Activated naive CD8-positive, alpha-beta T cell treated with anti-CD3 and anti-CD28 coated beads, Interleukin-2, amount 10 ng/mL, durations not matched to agents 7 days and 5 days (primary cell): ENCODE measurements at regions of chr3 and their contacts with region 1.

Region 1: GRCh38 chr3:46406788-46407611 is at the starts of genes CCR5AS and CCRL2:
- DNase-seq: peak; percentile 64
- ATAC-seq: peak; percentile 86
- H3K4me3 Mint-ChIP-seq: peak within 1 kb of the TSS; percentile 89
- H3K27ac Mint-ChIP-seq: peak within 1 kb of the TSS; percentile 94
- H3K4me1 Mint-ChIP-seq: peaks cover 35% of the 10 kb centered on the region
- H3K27me3 Mint-ChIP-seq: peaks cover 15% of the 10 kb centered on the region
- total RNA-seq, gene CCRL2: 13.5 to 14.4 TPM

Region 2: DNA sequence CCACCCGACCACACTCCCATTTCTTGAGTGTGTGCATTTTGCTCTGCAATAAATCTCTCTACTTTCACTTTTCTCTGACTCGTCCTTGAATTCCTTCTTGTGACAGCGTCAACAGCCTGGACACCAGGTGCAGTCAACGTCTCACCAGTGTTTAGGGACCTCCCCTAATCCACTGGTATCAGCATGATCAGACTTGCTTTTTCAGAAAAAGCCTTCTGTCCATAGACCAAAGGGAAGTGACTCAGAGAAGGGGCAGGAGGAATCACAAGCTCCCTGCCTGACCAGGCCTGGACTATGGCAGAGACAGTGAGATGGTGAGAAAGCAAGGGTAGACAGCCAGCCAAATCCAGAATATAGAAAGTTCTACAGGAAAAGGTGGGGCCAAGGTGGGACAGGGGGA is 20.8 kb before region 1 on chr3:
- POLR2A ChIA-PET with region 1: interaction called, 30 read pairs
- DNase-seq: no peak
- ATAC-seq: peak; percentile 48
- H3K4me3 Mint-ChIP-seq: peak overlapping the region; percentile 58
- H3K27ac Mint-ChIP-seq: peak overlapping the region; percentile 66
- H3K4me1 Mint-ChIP-seq: peaks cover 31% of the 10 kb centered on the region
- H3K27me3 Mint-ChIP-seq: no peaks in the 10 kb centered on the region